Heart left ventricle (tissue), 16 donors: ENCODE measurements at regions of chr6 and their contacts with region 1.

Region 1: GRCh38 chr6:10609995-10610688 is 84.3 kb downstream of the C6orf52 start:
- DNase-seq: peak in 4 of 5 donors; percentile 59 to 77 (median 67)
- ATAC-seq: peak; percentile 82 to 90 (median 86)
- H3K4me3 ChIP-seq: no peak overlapping the region
- H3K27ac ChIP-seq: peak overlapping the region; percentile 11 to 93 (median 72)
- H3K4me1 ChIP-seq: peaks cover 0 to 35% (median 5%) of the 10 kb centered on the region in 12 donors
- H3K27me3 ChIP-seq: no peaks in the 10 kb centered on the region
- CTCF ChIP-seq: no peak
- POLR2A ChIP-seq: no peak

Region 2: GRCh38 chr6:10521104-10521808 is 88.9 kb before region 1 on chr6 and contains the start of gene GCNT2:
- intact Hi-C with region 1: loop called in 2 of 10 experiments (anchors 5 to 10 kb)
- DNase-seq: peak in 2 of 5 donors; percentile 15 to 43
- ATAC-seq: peak; percentile 58 to 81 (median 76)
- H3K4me3 ChIP-seq: peak within 1 kb of the TSS; percentile 2 to 53 (median 38)
- H3K27ac ChIP-seq: peak within 1 kb of the TSS; percentile 6 to 85 (median 76)
- H3K4me1 ChIP-seq: peaks cover 0 to 34% (median 7%) of the 10 kb centered on the region in 12 donors
- H3K27me3 ChIP-seq: no peaks in the 10 kb centered on the region
- CTCF ChIP-seq: no peak
- POLR2A ChIP-seq: no peak
- total RNA-seq, gene GCNT2: 29.2 to 68.8 (median 43.1) TPM

Region 3: GRCh38 chr6:10528170-10528981 is 81.8 kb before region 1 on chr6:
- intact Hi-C with region 1: loop called in 2 of 10 experiments (anchors 5 to 10 kb)
- DNase-seq: no peak
- ATAC-seq: peak in 3 of 4 donors; percentile 30 to 57 (median 53)
- H3K4me3 ChIP-seq: peak overlapping the region in 9 of 12 donors; percentile 19 to 59 (median 51)
- H3K27ac ChIP-seq: peak overlapping the region in 11 of 12 donors; percentile 20 to 73 (median 61)
- H3K4me1 ChIP-seq: peaks cover 0 to 55% (median 9%) of the 10 kb centered on the region in 12 donors
- H3K27me3 ChIP-seq: no peaks in the 10 kb centered on the region
- CTCF ChIP-seq: no peak
- POLR2A ChIP-seq: no peak